ENCODE measurements at regions of chr10 and their contacts with region 1.

Region 1: GRCh38 chr10:34637418-34637911 is 177.6 kb downstream of the PARD3 start:
- DNase-seq: peak; percentile 51
- H3K4me3 Mint-ChIP-seq: no peak overlapping the region
- H3K27ac Mint-ChIP-seq: peak overlapping the region; percentile 2
- H3K4me1 Mint-ChIP-seq: peaks cover 40% of the 10 kb centered on the region
- H3K27me3 Mint-ChIP-seq: no peaks in the 10 kb centered on the region
- CTCF ChIP-seq: peak; percentile 98

Region 2: GRCh38 chr10:33193057-33193700 is 1444.3 kb before region 1 on chr10:
- CTCF ChIA-PET with region 1: interaction called, 3 read pairs
- POLR2A ChIA-PET with region 1: no interaction called
- intact Hi-C with region 1: loop called (anchors 2 kb)
- DNase-seq: peak; percentile 92
- H3K4me3 Mint-ChIP-seq: peak overlapping the region; percentile 47
- H3K27ac Mint-ChIP-seq: peak overlapping the region; percentile 52
- H3K4me1 Mint-ChIP-seq: peaks cover 20% of the 10 kb centered on the region
- H3K27me3 Mint-ChIP-seq: no peaks in the 10 kb centered on the region
- CTCF ChIP-seq: peak; percentile 75

Region 3: DNA sequence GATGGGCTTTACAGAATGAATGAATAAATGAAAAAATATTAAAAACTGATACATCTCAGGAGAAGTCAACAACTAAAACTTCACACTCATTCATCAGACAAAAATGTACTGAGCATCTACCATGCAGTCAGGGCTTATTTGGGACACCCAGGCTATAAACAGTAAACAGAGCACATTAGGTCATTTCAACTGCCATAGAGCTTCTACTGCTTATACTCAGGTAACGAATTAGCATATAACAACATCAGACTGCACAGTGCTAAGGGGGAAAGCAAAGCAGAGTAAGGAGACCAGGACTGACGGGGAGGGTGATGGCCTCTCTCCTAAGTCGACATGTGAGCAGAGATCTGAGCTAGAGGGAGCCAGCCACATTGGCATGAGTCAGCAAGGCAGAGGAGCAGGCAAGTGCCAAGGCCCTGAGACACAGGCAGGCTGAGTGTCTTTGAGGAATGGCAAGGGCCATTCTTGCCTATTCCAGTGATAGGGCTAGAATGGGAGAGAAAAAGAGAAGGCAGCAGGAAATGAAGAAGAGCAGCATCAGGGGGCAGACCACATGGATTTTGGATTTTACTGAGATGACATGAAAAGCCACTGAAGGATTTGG is 351.2 kb before region 1 on chr10:
- CTCF ChIA-PET with region 1: interaction called, 3 read pairs
- POLR2A ChIA-PET with region 1: no interaction called
- intact Hi-C with region 1: loop called (anchors 5 kb)
- DNase-seq: peak; percentile 72
- H3K4me3 Mint-ChIP-seq: no peak overlapping the region
- H3K27ac Mint-ChIP-seq: peak overlapping the region; percentile 73
- H3K4me1 Mint-ChIP-seq: peaks cover 30% of the 10 kb centered on the region
- H3K27me3 Mint-ChIP-seq: no peaks in the 10 kb centered on the region
- CTCF ChIP-seq: no peak

Region 4: DNA sequence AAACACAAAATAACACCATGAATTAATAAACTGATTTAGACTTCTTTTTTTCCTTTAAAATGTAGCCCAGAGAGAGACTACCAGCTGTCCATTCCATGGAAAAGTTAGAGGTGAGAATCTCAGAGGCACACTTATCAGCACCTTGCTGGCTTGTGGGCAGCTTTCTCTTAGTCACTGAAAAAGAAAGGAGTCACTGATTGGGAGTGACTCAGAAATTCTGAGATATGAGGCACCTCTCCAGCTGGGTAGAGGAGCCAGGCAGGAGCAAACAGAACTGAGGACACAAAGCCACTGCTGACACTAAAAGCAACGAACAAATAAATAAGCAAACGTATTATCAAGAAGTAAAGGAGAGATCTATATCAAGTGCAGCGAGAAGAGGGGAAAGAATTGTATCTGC is 132.9 kb before region 1 on chr10:
- CTCF ChIA-PET with region 1: no interaction called
- POLR2A ChIA-PET with region 1: no interaction called
- intact Hi-C with region 1: no loop called
- DNase-seq: peak; percentile 61
- H3K4me3 Mint-ChIP-seq: no peak overlapping the region
- H3K27ac Mint-ChIP-seq: peak overlapping the region; percentile 6
- H3K4me1 Mint-ChIP-seq: peaks cover 18% of the 10 kb centered on the region
- H3K27me3 Mint-ChIP-seq: no peaks in the 10 kb centered on the region
- CTCF ChIP-seq: no peak

Region 5: GRCh38 chr10:34523017-34523767 is 114.3 kb before region 1 on chr10:
- CTCF ChIA-PET with region 1: interaction called, 3 read pairs
- POLR2A ChIA-PET with region 1: no interaction called
- intact Hi-C with region 1: loop called (anchors 1 kb)
- DNase-seq: peak; percentile 27
- H3K4me3 Mint-ChIP-seq: no peak overlapping the region
- H3K27ac Mint-ChIP-seq: no peak overlapping the region
- H3K4me1 Mint-ChIP-seq: peaks cover 67% of the 10 kb centered on the region
- H3K27me3 Mint-ChIP-seq: no peaks in the 10 kb centered on the region
- CTCF ChIP-seq: no peak

Region 6: DNA sequence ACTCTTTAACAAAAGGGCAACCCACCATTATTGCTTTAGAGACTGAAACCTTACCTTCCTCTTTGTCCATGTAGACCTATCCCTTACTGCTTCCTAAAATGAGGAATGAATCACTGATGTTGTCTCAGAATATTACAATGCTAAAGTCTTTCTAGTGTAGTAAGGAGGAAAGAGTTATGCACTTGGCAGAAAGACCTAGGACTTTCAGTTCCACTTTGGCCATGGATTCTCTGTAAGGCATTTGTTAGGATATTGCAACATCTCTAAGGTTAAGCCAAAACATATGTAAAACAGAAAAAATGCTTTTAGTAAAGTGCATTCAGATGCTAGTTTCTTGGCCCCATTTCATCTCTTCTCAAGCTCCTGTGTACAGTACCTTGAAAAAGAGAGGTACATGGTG is 53.3 kb before region 1 on chr10:
- CTCF ChIA-PET with region 1: no interaction called
- POLR2A ChIA-PET with region 1: no interaction called
- intact Hi-C with region 1: loop called (anchors 5 kb)
- DNase-seq: peak; percentile 81
- H3K4me3 Mint-ChIP-seq: peak overlapping the region; percentile 60
- H3K27ac Mint-ChIP-seq: peak overlapping the region; percentile 88
- H3K4me1 Mint-ChIP-seq: peaks cover 57% of the 10 kb centered on the region
- H3K27me3 Mint-ChIP-seq: no peaks in the 10 kb centered on the region
- CTCF ChIP-seq: no peak

Region 7: DNA sequence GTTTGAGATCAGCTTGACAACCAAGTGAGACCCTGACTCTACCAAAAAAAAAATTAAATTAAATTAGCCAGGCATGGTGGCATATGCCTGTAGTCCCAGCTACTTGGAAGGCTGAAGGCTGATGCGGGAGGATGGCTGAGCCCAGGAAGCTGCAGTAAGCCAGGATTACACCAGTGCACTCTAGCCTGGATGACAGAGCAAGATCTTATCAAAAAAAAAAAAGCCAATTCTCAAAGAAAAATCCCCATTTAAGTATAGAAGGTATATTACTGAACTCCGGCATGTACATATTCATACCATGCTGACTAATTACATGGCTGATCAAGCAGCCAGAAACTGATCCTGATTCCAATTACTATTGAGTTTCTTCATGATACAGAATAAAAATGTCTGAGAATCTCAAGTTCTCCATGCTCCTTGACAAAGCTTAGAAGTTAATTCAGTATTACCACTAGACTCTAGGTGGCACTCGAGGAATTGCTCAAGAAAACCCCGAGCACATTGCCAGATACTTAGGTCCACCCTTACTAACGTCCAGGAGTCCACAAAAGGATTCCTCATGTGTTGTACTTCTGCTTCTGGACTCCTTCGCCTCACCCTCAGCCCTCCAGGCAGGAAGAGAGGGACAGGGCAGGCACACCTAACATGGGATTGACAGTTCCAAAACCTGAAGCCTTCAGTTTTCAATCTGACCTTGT is 28.7 kb after region 1 on chr10:
- CTCF ChIA-PET with region 1: no interaction called
- POLR2A ChIA-PET with region 1: no interaction called
- intact Hi-C with region 1: no loop called
- DNase-seq: peak; percentile 90
- H3K4me3 Mint-ChIP-seq: peak overlapping the region; percentile 57
- H3K27ac Mint-ChIP-seq: peak overlapping the region; percentile 87
- H3K4me1 Mint-ChIP-seq: peaks cover 24% of the 10 kb centered on the region
- H3K27me3 Mint-ChIP-seq: no peaks in the 10 kb centered on the region
- CTCF ChIP-seq: peak; percentile 73

Region 8: GRCh38 chr10:35027567-35027966 is 390.1 kb after region 1 on chr10:
- CTCF ChIA-PET with region 1: no interaction called
- POLR2A ChIA-PET with region 1: no interaction called
- intact Hi-C with region 1: no loop called
- DNase-seq: peak; percentile 38
- H3K4me3 Mint-ChIP-seq: no peak overlapping the region
- H3K27ac Mint-ChIP-seq: no peak overlapping the region
- H3K4me1 Mint-ChIP-seq: peaks cover 5% of the 10 kb centered on the region
- H3K27me3 Mint-ChIP-seq: no peaks in the 10 kb centered on the region
- CTCF ChIP-seq: peak; percentile 44

Measured in MCF 10A (cell line).